Naive thymus-derived CD4-positive, alpha-beta T cell (primary cell): ENCODE measurements at regions of chr22 and their contacts with region 1.

Region 1: DNA sequence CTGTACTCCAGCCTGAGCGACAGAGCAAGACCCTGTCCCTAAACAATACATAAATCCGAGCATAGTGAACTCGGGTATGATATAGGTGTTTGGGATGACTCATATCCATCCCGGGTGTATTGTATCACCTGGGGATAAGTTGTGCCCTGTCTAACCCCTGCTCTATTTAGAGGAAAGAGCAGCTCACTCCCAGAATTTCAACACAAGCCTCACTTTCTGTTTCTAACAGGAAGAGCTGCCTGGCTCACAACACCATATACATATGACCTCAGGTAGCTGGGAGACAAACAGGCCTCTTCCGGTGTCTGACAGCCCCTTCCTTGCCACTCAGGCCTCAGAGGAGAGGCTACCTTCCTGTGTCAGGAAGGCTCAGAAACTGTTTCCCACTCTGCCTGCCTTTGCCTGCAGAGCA is 9.9 kb upstream of the MICALL1 start:
- DNase-seq: peak in 8 of 9 donors; percentile 41 to 60 (median 50)
- ATAC-seq: peak; percentile 91
- H3K4me3 ChIP-seq: peak overlapping the region; percentile 2
- H3K4me3 Mint-ChIP-seq: peak overlapping the region; percentile 40 to 84 (median 73)
- H3K27ac ChIP-seq: peak overlapping the region; percentile 67
- H3K27ac Mint-ChIP-seq: peak overlapping the region; percentile 88 to 98 (median 96)
- H3K4me1 ChIP-seq: peaks cover 13 to 17% of the 10 kb centered on the region in 2 donors
- H3K4me1 Mint-ChIP-seq: peaks cover 16 to 38% (median 26%) of the 10 kb centered on the region in 7 donors
- H3K27me3 ChIP-seq: no peaks in the 10 kb centered on the region
- H3K27me3 Mint-ChIP-seq: no peaks in the 10 kb centered on the region

Region 2: DNA sequence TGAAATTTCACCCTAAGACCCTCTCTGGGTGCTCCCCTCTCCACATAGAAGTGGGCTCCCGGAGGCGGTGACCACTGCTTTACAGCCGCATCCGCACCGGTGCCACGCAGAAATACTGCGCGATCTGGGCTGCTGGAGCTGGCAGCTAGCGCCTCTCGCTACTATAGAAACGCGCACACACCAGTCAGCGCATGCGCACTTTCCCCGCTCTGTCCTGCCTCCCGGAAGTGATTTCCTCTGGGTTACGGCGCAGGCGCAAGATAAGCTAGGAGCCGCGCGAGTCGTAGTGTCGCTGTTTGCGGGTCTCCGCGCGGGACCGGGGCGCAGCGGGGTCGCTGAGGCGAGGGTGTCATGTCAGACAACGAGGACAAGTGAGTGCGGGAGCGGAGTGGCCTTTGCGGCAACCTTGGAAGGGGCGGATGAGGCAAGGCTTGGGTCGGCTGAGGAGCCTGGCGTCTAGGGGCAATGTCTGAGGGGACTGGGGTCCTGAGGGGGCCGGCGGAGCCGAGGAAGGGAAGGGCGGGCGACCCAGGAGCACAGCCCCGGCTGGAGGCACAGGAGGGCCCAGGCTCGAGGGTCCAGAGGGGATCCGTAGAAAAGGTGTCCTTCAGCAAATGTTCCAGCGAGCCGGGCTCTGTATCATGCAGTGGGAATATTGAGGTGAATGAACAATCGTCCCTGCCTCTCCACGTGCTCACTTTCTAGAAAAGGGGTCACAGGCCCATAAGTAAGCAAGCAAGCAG is 57.4 kb after region 1 on chr22 and contains the starts of genes C22orf23 and POLR2F:
- CTCF ChIA-PET with region 1: no interaction called
- POLR2A ChIA-PET with region 1: interaction called, 4 read pairs
- intact Hi-C with region 1: loop called in 1 of 2 experiments (anchors 2 kb)
- DNase-seq: peak; percentile 92 to 96 (median 94)
- ATAC-seq: peak; percentile 97
- H3K4me3 ChIP-seq: peak within 1 kb of the TSS; percentile 96
- H3K4me3 Mint-ChIP-seq: peak within 1 kb of the TSS; percentile 93 to 100 (median 99)
- H3K27ac ChIP-seq: peak within 1 kb of the TSS; percentile 75
- H3K27ac Mint-ChIP-seq: peak within 1 kb of the TSS; percentile 93 to 99 (median 95)
- H3K4me1 ChIP-seq: peaks cover 13 to 18% of the 10 kb centered on the region in 2 donors
- H3K4me1 Mint-ChIP-seq: peaks cover 27 to 54% (median 51%) of the 10 kb centered on the region in 7 donors
- H3K27me3 ChIP-seq: no peaks in the 10 kb centered on the region
- H3K27me3 Mint-ChIP-seq: peaks cover 4 to 20% (median 14%) of the 10 kb centered on the region in 5 donors
- total RNA-seq, gene C22orf23: 0.31 TPM in 1 of 5 experiments, not detected in the others
- total RNA-seq, gene POLR2F: 25.9 to 67.8 (median 43.9) TPM